A673 (cell line): ENCODE measurements at regions of chr2 and their contacts with region 1.

Region 1: GRCh38 chr2:181573140-181573736 is 83.7 kb downstream of the CERKL start:
- DNase-seq: peak; percentile 53
- H3K4me3 ChIP-seq: no peak overlapping the region
- H3K27ac ChIP-seq: no peak overlapping the region
- H3K4me1 ChIP-seq: peaks cover 13% of the 10 kb centered on the region
- H3K27me3 ChIP-seq: no peaks in the 10 kb centered on the region
- CTCF ChIP-seq: peak; percentile 67

Region 2: DNA sequence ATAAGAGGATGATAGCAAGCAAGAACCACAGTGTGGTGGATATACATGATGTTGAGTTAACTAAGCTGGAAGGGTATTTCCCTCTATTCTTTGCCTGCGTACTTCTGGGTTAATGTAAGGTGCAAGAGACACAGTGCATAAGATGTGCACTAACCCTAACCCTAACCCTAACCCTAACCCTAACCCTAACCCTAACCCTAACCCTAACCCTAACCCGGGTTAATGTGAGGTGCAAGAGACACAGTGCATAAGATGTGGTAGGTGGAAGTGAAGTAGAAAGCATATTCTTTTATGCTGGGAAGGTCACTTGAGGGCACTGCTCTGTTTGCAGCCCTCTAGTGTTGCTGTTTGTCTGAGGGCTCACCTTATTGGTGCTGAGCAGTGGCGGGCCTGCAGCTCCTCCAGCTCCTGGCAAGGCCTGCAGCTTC is 297.6 kb before region 1 on chr2:
- CTCF ChIA-PET with region 1: no interaction called
- POLR2A ChIA-PET with region 1: no interaction called
- intact Hi-C with region 1: no loop called
- DNase-seq: no peak
- H3K4me3 ChIP-seq: no peak overlapping the region
- H3K27ac ChIP-seq: no peak overlapping the region
- H3K4me1 ChIP-seq: no peaks in the 10 kb centered on the region
- H3K27me3 ChIP-seq: no peaks in the 10 kb centered on the region
- CTCF ChIP-seq: no peak

Region 3: DNA sequence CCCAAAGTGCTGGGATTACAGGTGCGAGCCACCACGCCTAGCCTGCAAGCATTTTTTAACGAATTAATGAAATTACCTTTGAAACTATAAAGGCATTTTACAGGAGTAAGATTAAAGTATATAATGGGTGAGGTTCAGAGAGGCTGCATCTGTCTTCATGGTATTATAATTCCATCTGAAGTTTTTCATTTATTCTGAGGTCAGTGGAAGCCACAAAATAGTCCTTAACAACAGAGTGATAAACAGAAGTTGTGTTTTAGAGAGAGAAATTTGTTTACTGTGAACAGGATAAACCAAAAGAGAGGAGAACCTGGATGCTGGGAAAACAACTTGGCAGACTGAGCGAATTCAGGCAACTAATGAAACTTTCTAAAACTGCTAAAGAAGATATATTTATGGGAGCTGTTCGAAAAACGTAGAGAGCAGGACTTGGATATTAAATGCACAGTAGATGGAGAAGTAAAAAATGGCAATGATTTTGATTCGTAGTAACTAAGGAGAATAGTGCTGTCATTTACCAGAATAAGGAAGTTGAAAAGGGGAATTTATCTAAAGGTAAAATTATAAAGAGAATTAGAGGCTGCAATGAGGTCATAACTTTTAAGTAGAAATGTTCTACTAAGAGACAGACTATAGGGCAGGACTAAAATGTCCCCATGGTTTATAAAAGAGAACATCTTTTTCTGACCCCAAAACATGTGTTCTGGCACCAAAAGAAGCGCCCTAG is 153.9 kb before region 1 on chr2:
- CTCF ChIA-PET with region 1: no interaction called
- POLR2A ChIA-PET with region 1: no interaction called
- intact Hi-C with region 1: no loop called
- DNase-seq: no peak
- H3K4me3 ChIP-seq: no peak overlapping the region
- H3K27ac ChIP-seq: no peak overlapping the region
- H3K4me1 ChIP-seq: no peaks in the 10 kb centered on the region
- H3K27me3 ChIP-seq: no peaks in the 10 kb centered on the region
- CTCF ChIP-seq: no peak

Region 4: GRCh38 chr2:181683518-181684453 is 110.5 kb after region 1 on chr2:
- CTCF ChIA-PET with region 1: no interaction called
- POLR2A ChIA-PET with region 1: no interaction called
- intact Hi-C with region 1: loop called (anchors 10 kb)
- DNase-seq: peak; percentile 63
- H3K4me3 ChIP-seq: peak overlapping the region; percentile 21
- H3K27ac ChIP-seq: no peak overlapping the region
- H3K4me1 ChIP-seq: peaks cover 11% of the 10 kb centered on the region
- H3K27me3 ChIP-seq: peaks cover 84% of the 10 kb centered on the region
- CTCF ChIP-seq: no peak

Region 5: DNA sequence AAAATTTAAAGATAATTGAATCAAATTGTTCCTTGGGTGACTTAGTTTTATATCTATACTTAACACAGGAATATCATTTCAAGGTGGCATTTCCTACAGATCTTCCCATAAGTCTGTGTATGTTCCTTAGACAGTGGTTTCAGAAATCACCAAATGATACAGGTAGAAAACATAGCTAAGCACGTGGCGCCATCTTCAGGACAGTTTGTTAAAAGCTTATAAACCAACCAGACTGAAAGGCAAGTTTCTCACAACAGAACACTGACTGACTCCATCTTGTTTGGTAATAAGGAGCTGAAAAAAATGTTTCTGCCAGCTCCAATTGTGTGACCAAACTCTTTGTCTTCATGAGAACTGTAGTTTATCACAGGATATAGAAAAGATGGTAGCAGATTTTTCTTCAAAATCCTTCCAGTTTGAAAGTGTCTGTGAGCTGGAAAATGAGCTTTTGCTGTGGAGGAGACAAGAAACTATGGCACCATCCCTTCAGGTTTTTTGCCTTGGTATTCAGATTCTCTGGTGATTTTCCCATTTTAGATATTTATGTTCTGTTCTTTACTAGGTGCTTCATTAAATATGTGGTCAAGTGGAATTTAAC is 141.9 kb after region 1 on chr2:
- CTCF ChIA-PET with region 1: interaction called, 28 read pairs
- POLR2A ChIA-PET with region 1: no interaction called
- intact Hi-C with region 1: loop called (anchors 2 kb)
- DNase-seq: peak; percentile 85
- H3K4me3 ChIP-seq: no peak overlapping the region
- H3K27ac ChIP-seq: no peak overlapping the region
- H3K4me1 ChIP-seq: no peaks in the 10 kb centered on the region
- H3K27me3 ChIP-seq: no peaks in the 10 kb centered on the region
- CTCF ChIP-seq: peak; percentile 81

Region 6: GRCh38 chr2:181790716-181791649 is 217.7 kb after region 1 on chr2:
- CTCF ChIA-PET with region 1: no interaction called
- POLR2A ChIA-PET with region 1: no interaction called
- intact Hi-C with region 1: no loop called
- DNase-seq: peak; percentile 74
- H3K4me3 ChIP-seq: no peak overlapping the region
- H3K27ac ChIP-seq: no peak overlapping the region
- H3K4me1 ChIP-seq: peaks cover 9% of the 10 kb centered on the region
- H3K27me3 ChIP-seq: no peaks in the 10 kb centered on the region
- CTCF ChIP-seq: no peak

Region 7: DNA sequence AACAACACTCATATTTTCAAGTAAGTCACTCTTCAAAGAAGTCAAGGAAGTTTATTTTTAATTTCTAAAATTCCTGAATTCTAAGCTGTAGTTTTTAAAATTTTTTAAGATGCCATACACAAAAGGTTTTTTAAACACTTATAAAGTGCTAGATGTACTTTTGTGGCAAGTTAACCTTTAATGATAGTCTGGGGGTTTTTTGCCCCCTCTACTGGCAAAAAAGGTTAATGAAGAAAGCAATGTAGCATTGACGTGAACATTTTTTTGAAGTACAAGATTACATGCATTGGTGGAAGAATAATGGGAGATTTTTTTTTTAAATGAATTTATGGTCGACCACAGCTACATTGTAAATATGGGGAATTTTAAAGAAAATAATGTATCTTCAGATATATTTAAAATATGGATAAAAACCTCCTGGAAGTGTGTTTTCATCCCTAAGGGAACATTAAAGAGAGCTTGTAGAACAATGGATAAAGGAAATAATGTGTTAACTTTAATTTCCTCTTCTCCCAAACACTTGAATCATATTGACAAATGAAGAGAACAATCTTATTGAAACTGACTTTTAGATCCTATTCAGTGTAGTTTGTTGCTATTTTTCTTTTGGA is 330.9 kb after region 1 on chr2:
- CTCF ChIA-PET with region 1: no interaction called
- POLR2A ChIA-PET with region 1: no interaction called
- intact Hi-C with region 1: loop called (anchors 10 kb)
- DNase-seq: peak; percentile 76
- H3K4me3 ChIP-seq: no peak overlapping the region
- H3K27ac ChIP-seq: peak overlapping the region; percentile 51
- H3K4me1 ChIP-seq: peaks cover 31% of the 10 kb centered on the region
- H3K27me3 ChIP-seq: no peaks in the 10 kb centered on the region
- CTCF ChIP-seq: peak; percentile 82

Region 8: GRCh38 chr2:182077451-182078142 is 504.4 kb after region 1 on chr2:
- CTCF ChIA-PET with region 1: no interaction called
- POLR2A ChIA-PET with region 1: no interaction called
- intact Hi-C with region 1: loop called (anchors 5 kb)
- DNase-seq: peak; percentile 93
- H3K4me3 ChIP-seq: no peak overlapping the region
- H3K27ac ChIP-seq: no peak overlapping the region
- H3K4me1 ChIP-seq: peaks cover 19% of the 10 kb centered on the region
- H3K27me3 ChIP-seq: no peaks in the 10 kb centered on the region
- CTCF ChIP-seq: peak; percentile 72